ENCODE measurements at regions of chr22 and their contacts with region 1.

Region 1: GRCh38 chr22:36028646-36029405 is at the start of gene RBFOX2:
- DNase-seq: peak; percentile 99
- H3K4me3 ChIP-seq: peak within 1 kb of the TSS; percentile 64 to 95 (median 84)
- H3K27ac ChIP-seq: peak within 1 kb of the TSS; percentile 90 to 98 (median 97)
- H3K4me1 ChIP-seq: peaks cover 0 to 39% (median 27%) of the 10 kb centered on the region in 4 donors
- H3K27me3 ChIP-seq: no peaks in the 10 kb centered on the region
- CTCF ChIP-seq: no peak
- EP300 ChIP-seq: no peak
- POLR2A ChIP-seq: no peak
- total RNA-seq, gene RBFOX2: 138 to 164 (median 148) TPM

Region 2: GRCh38 chr22:35971456-35972119 is 57.2 kb before region 1 on chr22:
- intact Hi-C with region 1: loop called (anchors 5 kb)
- DNase-seq: no peak
- H3K4me3 ChIP-seq: no peak overlapping the region
- H3K27ac ChIP-seq: peak overlapping the region; percentile 83 to 89 (median 84)
- H3K4me1 ChIP-seq: peaks cover 0 to 89% (median 58%) of the 10 kb centered on the region in 4 donors
- H3K27me3 ChIP-seq: no peaks in the 10 kb centered on the region
- CTCF ChIP-seq: no peak
- EP300 ChIP-seq: no peak
- POLR2A ChIP-seq: no peak

Region 3: GRCh38 chr22:35995772-35996171 is 33.1 kb before region 1 on chr22:
- intact Hi-C with region 1: no loop called
- DNase-seq: peak; percentile 95
- H3K4me3 ChIP-seq: no peak overlapping the region
- H3K27ac ChIP-seq: peak overlapping the region; percentile 76 to 86 (median 79)
- H3K4me1 ChIP-seq: peaks cover 0 to 61% (median 49%) of the 10 kb centered on the region in 4 donors
- H3K27me3 ChIP-seq: no peaks in the 10 kb centered on the region
- CTCF ChIP-seq: no peak
- EP300 ChIP-seq: peak in 2 of 4 donors; percentile 16 to 21
- POLR2A ChIP-seq: no peak

Region 4: DNA sequence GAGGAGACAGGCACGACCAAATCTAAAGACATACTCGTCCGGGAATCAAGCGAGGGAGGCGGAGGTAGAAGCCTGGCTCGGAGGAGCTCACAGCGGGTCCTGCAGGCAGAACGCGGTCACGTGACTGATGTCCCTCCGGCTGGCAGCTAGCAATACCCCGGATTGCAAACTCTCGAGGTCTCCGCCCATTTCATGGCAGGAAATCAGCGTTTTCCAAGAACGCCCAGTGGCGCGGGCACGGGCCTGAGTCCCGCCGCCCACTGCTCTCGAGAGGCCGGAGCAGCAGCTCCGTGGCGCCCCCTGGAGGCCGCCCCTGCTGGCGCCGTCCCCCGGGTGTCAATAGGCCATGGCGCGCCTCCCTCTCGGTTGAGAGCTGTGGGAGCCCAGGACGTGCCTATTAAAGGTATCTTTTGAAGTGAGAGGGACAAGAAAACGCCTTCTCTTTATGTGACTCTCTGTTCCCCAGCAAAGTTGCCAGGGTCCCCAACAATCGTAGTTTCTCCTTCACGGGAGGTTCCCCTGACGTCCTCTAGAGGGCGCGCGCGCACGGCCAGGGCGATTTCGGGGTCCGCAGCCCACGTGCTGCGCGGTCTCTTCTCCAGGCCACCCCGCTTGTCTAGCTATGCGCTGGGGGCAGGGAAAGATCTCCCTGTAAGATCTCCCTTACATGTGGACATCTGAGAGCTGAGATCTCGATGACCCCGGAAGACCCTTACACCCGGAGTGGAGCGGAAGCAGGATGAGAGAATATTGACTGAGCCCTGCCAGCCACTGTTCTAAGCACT is 37.1 kb after region 1 on chr22:
- intact Hi-C with region 1: loop called (anchors 2 kb)
- DNase-seq: peak; percentile 97
- H3K4me3 ChIP-seq: peak overlapping the region; percentile 21 to 59 (median 48)
- H3K27ac ChIP-seq: peak overlapping the region; percentile 83 to 95 (median 85)
- H3K4me1 ChIP-seq: peaks cover 0 to 20% (median 16%) of the 10 kb centered on the region in 4 donors
- H3K27me3 ChIP-seq: no peaks in the 10 kb centered on the region
- CTCF ChIP-seq: peak; percentile 100
- EP300 ChIP-seq: no peak
- POLR2A ChIP-seq: no peak

Region 5: DNA sequence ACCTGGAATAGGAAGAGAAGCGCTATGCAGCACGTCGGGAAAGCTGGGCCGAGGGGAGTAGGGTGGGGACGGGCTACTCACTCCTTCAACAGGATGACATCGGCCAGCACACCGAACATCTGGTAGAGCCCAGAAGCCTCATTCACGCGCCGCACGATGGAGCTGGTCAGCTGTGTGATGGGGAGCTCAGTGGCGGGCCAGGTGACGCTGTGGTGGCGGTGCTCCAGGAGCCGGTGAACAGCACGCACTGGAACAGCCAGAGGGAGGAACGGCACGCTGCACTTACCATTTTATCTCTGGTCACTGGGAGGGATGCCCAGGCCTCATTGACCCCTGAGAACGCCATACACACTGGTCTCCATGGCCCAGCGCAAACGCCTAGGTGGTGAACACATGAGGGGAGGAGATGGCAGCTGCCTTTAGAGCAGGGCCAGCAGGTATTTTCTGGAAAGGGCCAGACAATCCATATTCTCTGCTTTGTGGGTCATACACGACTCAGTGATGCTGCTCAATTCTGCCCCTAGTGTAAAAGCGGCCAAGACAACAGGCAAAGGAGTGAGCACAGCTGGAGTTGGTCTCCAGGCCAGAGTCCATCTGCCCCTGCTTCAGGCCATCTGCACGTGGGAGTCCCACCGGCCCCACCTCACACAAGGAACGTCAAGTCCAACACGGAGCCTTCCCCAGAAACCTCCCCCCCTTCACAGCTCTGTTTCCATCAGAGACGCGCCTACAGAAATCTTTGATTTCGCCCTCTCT is 469.3 kb after region 1 on chr22:
- intact Hi-C with region 1: no loop called
- DNase-seq: no peak
- H3K4me3 ChIP-seq: no peak overlapping the region
- H3K27ac ChIP-seq: no peak overlapping the region
- H3K4me1 ChIP-seq: no peaks in the 10 kb centered on the region
- H3K27me3 ChIP-seq: no peaks in the 10 kb centered on the region
- CTCF ChIP-seq: no peak
- EP300 ChIP-seq: no peak
- POLR2A ChIP-seq: no peak

Measured in sigmoid colon (tissue), 7 donors.